Naive thymus-derived CD4-positive, alpha-beta T cell (primary cell): ENCODE measurements at regions of chr14 and their contacts with region 1.

Region 1: GRCh38 chr14:21734457-21735074 is 60.9 kb upstream of the OR4E1 start:
- DNase-seq: peak in 7 of 9 donors; percentile 44 to 71 (median 58)
- ATAC-seq: peak; percentile 73
- H3K4me3 ChIP-seq: no peak overlapping the region
- H3K4me3 Mint-ChIP-seq: peak overlapping the region in 9 of 10 donors; percentile 20 to 82 (median 58)
- H3K27ac ChIP-seq: no peak overlapping the region
- H3K27ac Mint-ChIP-seq: peak overlapping the region in 5 of 9 donors; percentile 6 to 85 (median 50)
- H3K4me1 ChIP-seq: no peaks in the 10 kb centered on the region
- H3K4me1 Mint-ChIP-seq: peaks cover 6 to 20% (median 14%) of the 10 kb centered on the region in 7 donors
- H3K27me3 ChIP-seq: no peaks in the 10 kb centered on the region
- H3K27me3 Mint-ChIP-seq: peaks cover 28 to 47% (median 42%) of the 10 kb centered on the region in 5 donors

Region 2: GRCh38 chr14:21711360-21711961 is 23.1 kb before region 1 on chr14:
- CTCF ChIA-PET with region 1: no interaction called
- POLR2A ChIA-PET with region 1: interaction called, 4 read pairs
- intact Hi-C with region 1: loop called in 1 of 2 experiments (anchors 1 kb)
- DNase-seq: peak in 5 of 9 donors; percentile 25 to 57 (median 37)
- ATAC-seq: peak; percentile 80
- H3K4me3 ChIP-seq: no peak overlapping the region
- H3K4me3 Mint-ChIP-seq: peak overlapping the region; percentile 25 to 82 (median 67)
- H3K27ac ChIP-seq: no peak overlapping the region
- H3K27ac Mint-ChIP-seq: peak overlapping the region in 7 of 9 donors; percentile 7 to 91 (median 72)
- H3K4me1 ChIP-seq: no peaks in the 10 kb centered on the region
- H3K4me1 Mint-ChIP-seq: peaks cover 0 to 8% (median 5%) of the 10 kb centered on the region in 7 donors
- H3K27me3 ChIP-seq: peaks cover 0 to 3% of the 10 kb centered on the region in 2 donors
- H3K27me3 Mint-ChIP-seq: peaks cover 9 to 44% (median 23%) of the 10 kb centered on the region in 5 donors

Region 3: GRCh38 chr14:21748869-21749303 is 14.3 kb after region 1 on chr14:
- CTCF ChIA-PET with region 1: interaction called, 6 read pairs
- POLR2A ChIA-PET with region 1: interaction called, 9 read pairs
- intact Hi-C with region 1: loop called (anchors 2 kb)
- DNase-seq: peak in 8 of 9 donors; percentile 31 to 60 (median 50)
- ATAC-seq: peak; percentile 89
- H3K4me3 ChIP-seq: no peak overlapping the region
- H3K4me3 Mint-ChIP-seq: peak overlapping the region; percentile 41 to 84 (median 66)
- H3K27ac ChIP-seq: peak overlapping the region; percentile 41
- H3K27ac Mint-ChIP-seq: peak overlapping the region; percentile 9 to 91 (median 72)
- H3K4me1 ChIP-seq: no peaks in the 10 kb centered on the region
- H3K4me1 Mint-ChIP-seq: peaks cover 4 to 10% (median 8%) of the 10 kb centered on the region in 7 donors
- H3K27me3 ChIP-seq: no peaks in the 10 kb centered on the region
- H3K27me3 Mint-ChIP-seq: peaks cover 0 to 27% (median 6%) of the 10 kb centered on the region in 5 donors

Region 4: GRCh38 chr14:21846227-21846885 is 111.8 kb after region 1 on chr14:
- CTCF ChIA-PET with region 1: no interaction called
- POLR2A ChIA-PET with region 1: no interaction called
- intact Hi-C with region 1: no loop called
- DNase-seq: peak; percentile 48 to 71 (median 64)
- ATAC-seq: peak; percentile 90
- H3K4me3 ChIP-seq: peak overlapping the region; percentile 36
- H3K4me3 Mint-ChIP-seq: peak overlapping the region; percentile 75 to 95 (median 84)
- H3K27ac ChIP-seq: peak overlapping the region; percentile 52
- H3K27ac Mint-ChIP-seq: peak overlapping the region in 8 of 9 donors; percentile 41 to 91 (median 85)
- H3K4me1 ChIP-seq: no peaks in the 10 kb centered on the region
- H3K4me1 Mint-ChIP-seq: peaks cover 1 to 17% (median 10%) of the 10 kb centered on the region in 7 donors
- H3K27me3 ChIP-seq: no peaks in the 10 kb centered on the region
- H3K27me3 Mint-ChIP-seq: peaks cover 13 to 52% (median 24%) of the 10 kb centered on the region in 5 donors